Mammary epithelial cell (primary cell): ENCODE measurements at regions of chr9 and their contacts with region 1.

Region 1: GRCh38 chr9:125143375-125144090 is at the start of gene SCAI:
- DNase-seq: peak; percentile 98
- H3K4me3 ChIP-seq: peak within 1 kb of the TSS; percentile 38 to 67 (median 59)
- H3K27ac ChIP-seq: no peak within 1 kb of the TSS
- H3K4me1 ChIP-seq: peaks cover 10% of the 10 kb centered on the region
- H3K27me3 ChIP-seq: no peaks in the 10 kb centered on the region
- CTCF ChIP-seq: peak; percentile 83 to 98
- total RNA-seq, gene SCAI: 3.1 to 7.7 TPM

Region 2: GRCh38 chr9:124906966-124907365 is 236.6 kb before region 1 on chr9:
- CTCF ChIA-PET with region 1: no interaction called
- dilution Hi-C with region 1: no loop called
- in situ Hi-C with region 1: no loop called
- intact Hi-C with region 1: loop called (anchors 10 kb)
- DNase-seq: no peak
- H3K4me3 ChIP-seq: no peak overlapping the region
- H3K27ac ChIP-seq: no peak overlapping the region
- H3K4me1 ChIP-seq: no peaks in the 10 kb centered on the region
- H3K27me3 ChIP-seq: no peaks in the 10 kb centered on the region
- CTCF ChIP-seq: no peak

Region 3: GRCh38 chr9:124940693-124941453 is 202.7 kb before region 1 on chr9 and contains the start of gene GOLGA1:
- CTCF ChIA-PET with region 1: no interaction called
- dilution Hi-C with region 1: no loop called
- in situ Hi-C with region 1: loop called in 1 of 2 experiments (anchors 25 kb)
- intact Hi-C with region 1: loop called (anchors 1 kb)
- DNase-seq: peak; percentile 95
- H3K4me3 ChIP-seq: peak within 1 kb of the TSS; percentile 86 to 100 (median 88)
- H3K27ac ChIP-seq: peak within 1 kb of the TSS; percentile 87
- H3K4me1 ChIP-seq: peaks cover 11% of the 10 kb centered on the region
- H3K27me3 ChIP-seq: no peaks in the 10 kb centered on the region
- CTCF ChIP-seq: no peak
- total RNA-seq, gene GOLGA1: 11.5 to 17.6 TPM

Region 4: GRCh38 chr9:125106285-125106893 is 37.1 kb before region 1 on chr9:
- CTCF ChIA-PET with region 1: no interaction called
- dilution Hi-C with region 1: no loop called
- in situ Hi-C with region 1: no loop called
- intact Hi-C with region 1: no loop called
- DNase-seq: peak; percentile 2
- H3K4me3 ChIP-seq: no peak overlapping the region
- H3K27ac ChIP-seq: no peak overlapping the region
- H3K4me1 ChIP-seq: no peaks in the 10 kb centered on the region
- H3K27me3 ChIP-seq: no peaks in the 10 kb centered on the region
- CTCF ChIP-seq: no peak